ENCODE measurements at regions of chr19 and their contacts with region 1.

Region 1: GRCh38 chr19:35963514-35963913 is 27.3 kb downstream of the LRFN3 start:
- DNase-seq: peak; percentile 39
- H3K4me3 ChIP-seq: no peak overlapping the region
- H3K27ac ChIP-seq: no peak overlapping the region
- H3K4me1 ChIP-seq: peaks cover 11% of the 10 kb centered on the region
- H3K27me3 ChIP-seq: peaks cover 13% of the 10 kb centered on the region
- CTCF ChIP-seq: no peak

Region 2: GRCh38 chr19:35557539-35558399 is 405.7 kb before region 1 on chr19:
- CTCF ChIA-PET with region 1: no interaction called
- dilution Hi-C with region 1: loop called (anchors 10 kb)
- in situ Hi-C with region 1: no loop called
- intact Hi-C with region 1: no loop called
- DNase-seq: peak; percentile 52
- H3K4me3 ChIP-seq: peak overlapping the region; percentile 36 to 44 (median 43)
- H3K27ac ChIP-seq: no peak overlapping the region
- H3K4me1 ChIP-seq: peaks cover 10% of the 10 kb centered on the region
- H3K27me3 ChIP-seq: no peaks in the 10 kb centered on the region
- CTCF ChIP-seq: no peak

Region 3: GRCh38 chr19:35833972-35834371 is 129.5 kb before region 1 on chr19:
- CTCF ChIA-PET with region 1: no interaction called
- dilution Hi-C with region 1: no loop called
- in situ Hi-C with region 1: no loop called
- intact Hi-C with region 1: no loop called
- DNase-seq: no peak
- H3K4me3 ChIP-seq: no peak overlapping the region
- H3K27ac ChIP-seq: no peak overlapping the region
- H3K4me1 ChIP-seq: no peaks in the 10 kb centered on the region
- H3K27me3 ChIP-seq: no peaks in the 10 kb centered on the region
- CTCF ChIP-seq: no peak

Region 4: DNA sequence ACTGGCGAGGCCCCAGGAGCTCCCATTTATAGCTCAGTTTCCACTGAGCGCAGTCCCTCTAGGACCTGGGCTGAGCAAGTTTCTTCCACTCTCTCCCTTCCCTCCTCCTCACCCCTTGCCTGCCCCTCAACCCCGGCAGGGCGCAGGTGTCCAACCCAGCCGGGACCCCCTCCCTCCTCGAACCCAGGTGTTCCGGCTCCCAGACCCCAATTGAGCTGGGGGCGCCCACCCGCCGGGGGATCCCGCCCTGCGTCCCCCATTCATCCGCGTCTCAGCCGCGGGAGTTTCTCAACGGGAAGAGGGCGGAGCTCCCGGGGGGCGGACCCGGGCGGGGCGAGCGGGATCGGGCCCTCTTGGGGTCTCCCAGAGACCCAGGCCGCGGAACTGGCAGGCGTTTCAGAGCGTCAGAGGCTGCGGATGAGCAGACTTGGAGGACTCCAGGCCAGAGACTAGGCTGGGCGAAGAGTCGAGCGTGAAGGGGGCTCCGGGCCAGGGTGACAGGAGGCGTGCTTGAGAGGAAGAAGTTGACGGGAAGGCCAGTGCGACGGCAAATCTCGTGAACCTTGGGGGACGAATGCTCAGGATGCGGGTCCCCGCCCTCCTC is 106.9 kb before region 1 on chr19 and contains the start of gene KIRREL2:
- CTCF ChIA-PET with region 1: no interaction called
- dilution Hi-C with region 1: loop called (anchors 10 kb)
- in situ Hi-C with region 1: no loop called
- intact Hi-C with region 1: no loop called
- DNase-seq: no peak
- H3K4me3 ChIP-seq: peak within 1 kb of the TSS; percentile 44 to 50 (median 47)
- H3K27ac ChIP-seq: no peak within 1 kb of the TSS
- H3K4me1 ChIP-seq: peaks cover 8% of the 10 kb centered on the region
- H3K27me3 ChIP-seq: peaks cover 15% of the 10 kb centered on the region
- CTCF ChIP-seq: no peak
- total RNA-seq, gene KIRREL2: not detected

Region 5: GRCh38 chr19:35928507-35928906 is 35.0 kb before region 1 on chr19:
- CTCF ChIA-PET with region 1: no interaction called
- dilution Hi-C with region 1: no loop called
- in situ Hi-C with region 1: no loop called
- intact Hi-C with region 1: no loop called
- DNase-seq: no peak
- H3K4me3 ChIP-seq: no peak overlapping the region
- H3K27ac ChIP-seq: no peak overlapping the region
- H3K4me1 ChIP-seq: no peaks in the 10 kb centered on the region
- H3K27me3 ChIP-seq: no peaks in the 10 kb centered on the region
- CTCF ChIP-seq: no peak

Region 6: GRCh38 chr19:36009220-36009619 is 45.7 kb after region 1 on chr19:
- CTCF ChIA-PET with region 1: no interaction called
- dilution Hi-C with region 1: loop called (anchors 5 kb)
- in situ Hi-C with region 1: no loop called
- intact Hi-C with region 1: no loop called
- DNase-seq: no peak
- H3K4me3 ChIP-seq: peak overlapping the region; percentile 33 to 44 (median 33)
- H3K27ac ChIP-seq: no peak overlapping the region
- H3K4me1 ChIP-seq: peaks cover 10% of the 10 kb centered on the region
- H3K27me3 ChIP-seq: no peaks in the 10 kb centered on the region
- CTCF ChIP-seq: peak in 1 of 2 donors; percentile 7

Region 7: GRCh38 chr19:36041831-36042230 is 78.3 kb after region 1 on chr19:
- CTCF ChIA-PET with region 1: no interaction called
- dilution Hi-C with region 1: no loop called
- in situ Hi-C with region 1: no loop called
- intact Hi-C with region 1: no loop called
- DNase-seq: peak; percentile 20
- H3K4me3 ChIP-seq: no peak overlapping the region
- H3K27ac ChIP-seq: no peak overlapping the region
- H3K4me1 ChIP-seq: peaks cover 8% of the 10 kb centered on the region
- H3K27me3 ChIP-seq: no peaks in the 10 kb centered on the region
- CTCF ChIP-seq: no peak

Region 8: GRCh38 chr19:36139473-36140303 is 176.2 kb after region 1 on chr19 and contains the start of gene CAPNS1:
- CTCF ChIA-PET with region 1: no interaction called
- dilution Hi-C with region 1: no loop called
- in situ Hi-C with region 1: no loop called
- intact Hi-C with region 1: no loop called
- DNase-seq: peak; percentile 95
- H3K4me3 ChIP-seq: peak within 1 kb of the TSS; percentile 77 to 87 (median 83)
- H3K27ac ChIP-seq: peak within 1 kb of the TSS; percentile 98
- H3K4me1 ChIP-seq: peaks cover 34% of the 10 kb centered on the region
- H3K27me3 ChIP-seq: no peaks in the 10 kb centered on the region
- CTCF ChIP-seq: peak; percentile 5 to 28
- total RNA-seq, gene CAPNS1: 328 to 1,073 TPM

Measured in mammary epithelial cell (primary cell).